ENCODE measurements at regions of chr4 and their contacts with region 1.

Region 1: GRCh38 chr4:185587427-185588161 is 52.3 kb upstream of the PDLIM3 start:
- DNase-seq: peak; percentile 91
- H3K4me3 Mint-ChIP-seq: peak overlapping the region; percentile 63
- H3K27ac Mint-ChIP-seq: peak overlapping the region; percentile 48
- H3K4me1 Mint-ChIP-seq: peaks cover 16% of the 10 kb centered on the region
- H3K27me3 Mint-ChIP-seq: peaks cover 43% of the 10 kb centered on the region

Region 2: GRCh38 chr4:185209031-185209851 is 378.4 kb before region 1 on chr4 and contains the start of gene SNX25:
- CTCF ChIA-PET with region 1: interaction called, 5 read pairs
- intact Hi-C with region 1: loop called (anchors 1 kb)
- DNase-seq: peak; percentile 84
- H3K4me3 Mint-ChIP-seq: peak within 1 kb of the TSS; percentile 84
- H3K27ac Mint-ChIP-seq: peak within 1 kb of the TSS; percentile 71
- H3K4me1 Mint-ChIP-seq: peaks cover 28% of the 10 kb centered on the region
- H3K27me3 Mint-ChIP-seq: no peaks in the 10 kb centered on the region
- total RNA-seq, gene SNX25: 11.0 to 14.6 TPM

Region 3: DNA sequence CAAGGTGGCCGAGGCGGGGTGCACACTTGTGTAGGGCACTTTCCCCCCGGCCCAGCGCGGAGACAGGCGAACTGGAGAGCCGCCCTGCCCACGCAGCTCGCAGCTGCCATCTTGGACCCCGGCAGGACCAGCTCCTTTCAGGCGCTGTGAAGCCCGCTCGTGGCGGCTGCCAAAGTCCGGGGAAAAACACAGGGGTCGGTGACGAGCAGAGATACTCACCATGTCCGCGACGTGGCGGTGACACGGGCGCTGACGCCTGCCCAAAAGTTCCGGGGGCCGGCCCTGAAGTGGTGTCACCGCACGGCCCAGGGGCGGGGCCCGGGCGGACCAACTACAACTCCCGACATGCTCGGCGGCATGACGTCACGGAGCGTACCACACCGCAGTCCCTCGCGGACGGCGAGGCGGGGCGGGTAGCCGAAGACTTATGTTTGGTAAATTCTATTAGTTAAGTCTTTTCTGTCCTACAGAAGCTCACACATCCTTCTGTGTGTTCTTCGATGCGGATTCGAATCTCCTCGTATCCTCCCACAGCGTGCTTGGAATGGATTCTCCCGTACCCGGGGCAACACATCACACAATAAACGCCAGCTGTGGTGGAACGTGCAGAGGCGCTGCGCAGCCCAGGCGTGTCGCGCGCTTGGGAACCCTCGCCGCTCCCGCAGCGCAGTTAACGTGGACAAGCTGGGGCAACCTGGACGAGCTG is 161.8 kb before region 1 on chr4 and contains the start of gene UFSP2:
- CTCF ChIA-PET with region 1: no interaction called
- intact Hi-C with region 1: loop called (anchors 2 kb)
- DNase-seq: peak; percentile 86
- H3K4me3 Mint-ChIP-seq: peak within 1 kb of the TSS; percentile 76
- H3K27ac Mint-ChIP-seq: peak within 1 kb of the TSS; percentile 96
- H3K4me1 Mint-ChIP-seq: peaks cover 28% of the 10 kb centered on the region
- H3K27me3 Mint-ChIP-seq: peaks cover 1% of the 10 kb centered on the region
- total RNA-seq, gene UFSP2: 24.4 to 30.7 TPM

Region 4: GRCh38 chr4:185566972-185567371 is 20.6 kb before region 1 on chr4:
- CTCF ChIA-PET with region 1: no interaction called
- intact Hi-C with region 1: loop called (anchors 1 kb)
- DNase-seq: no peak
- H3K4me3 Mint-ChIP-seq: no peak overlapping the region
- H3K27ac Mint-ChIP-seq: no peak overlapping the region
- H3K4me1 Mint-ChIP-seq: no peaks in the 10 kb centered on the region
- H3K27me3 Mint-ChIP-seq: peaks cover 5% of the 10 kb centered on the region

Region 5: DNA sequence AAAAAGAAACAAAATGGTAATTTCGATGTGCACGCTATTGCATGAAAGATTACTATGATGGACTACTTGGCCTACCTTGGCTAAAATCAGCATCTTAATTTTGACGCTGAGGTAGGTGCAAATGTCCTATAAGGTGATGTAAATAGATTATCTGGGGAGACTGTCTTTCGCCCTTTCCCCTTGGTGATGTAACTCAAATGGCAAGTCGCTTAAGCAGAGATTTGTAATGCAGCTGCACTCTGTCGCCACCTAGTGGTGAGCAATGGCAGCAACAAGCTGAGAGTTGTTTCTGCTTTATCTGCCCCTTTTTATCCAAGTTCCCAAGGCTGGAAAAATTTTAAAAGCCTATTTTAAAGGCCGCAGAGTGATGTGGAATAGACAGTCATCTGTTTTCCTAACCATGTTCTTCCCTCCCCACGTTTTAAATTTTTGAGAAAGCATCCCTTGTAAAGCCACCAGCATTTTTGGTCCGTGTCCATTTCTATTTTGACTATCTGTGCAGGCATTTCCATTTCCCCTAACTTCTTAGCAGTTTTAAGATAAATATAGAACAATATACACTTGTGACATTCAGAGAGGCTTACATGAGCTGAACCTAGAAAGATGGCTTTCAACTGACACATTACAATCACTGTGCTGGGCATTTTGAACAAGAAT is 10.1 kb after region 1 on chr4:
- CTCF ChIA-PET with region 1: interaction called, 28 read pairs
- intact Hi-C with region 1: no loop called
- DNase-seq: peak; percentile 84
- H3K4me3 Mint-ChIP-seq: no peak overlapping the region
- H3K27ac Mint-ChIP-seq: no peak overlapping the region
- H3K4me1 Mint-ChIP-seq: no peaks in the 10 kb centered on the region
- H3K27me3 Mint-ChIP-seq: peaks cover 13% of the 10 kb centered on the region

Region 6: GRCh38 chr4:185730387-185730786 is 142.8 kb after region 1 on chr4:
- CTCF ChIA-PET with region 1: no interaction called
- intact Hi-C with region 1: no loop called
- DNase-seq: no peak
- H3K4me3 Mint-ChIP-seq: no peak overlapping the region
- H3K27ac Mint-ChIP-seq: no peak overlapping the region
- H3K4me1 Mint-ChIP-seq: no peaks in the 10 kb centered on the region
- H3K27me3 Mint-ChIP-seq: peaks cover 24% of the 10 kb centered on the region

Region 7: GRCh38 chr4:186201535-186202230 is 614.1 kb after region 1 on chr4:
- CTCF ChIA-PET with region 1: no interaction called
- intact Hi-C with region 1: loop called (anchors 5 kb)
- DNase-seq: peak; percentile 79
- H3K4me3 Mint-ChIP-seq: peak overlapping the region; percentile 13
- H3K27ac Mint-ChIP-seq: peak overlapping the region; percentile 57
- H3K4me1 Mint-ChIP-seq: peaks cover 34% of the 10 kb centered on the region
- H3K27me3 Mint-ChIP-seq: no peaks in the 10 kb centered on the region

Region 8: DNA sequence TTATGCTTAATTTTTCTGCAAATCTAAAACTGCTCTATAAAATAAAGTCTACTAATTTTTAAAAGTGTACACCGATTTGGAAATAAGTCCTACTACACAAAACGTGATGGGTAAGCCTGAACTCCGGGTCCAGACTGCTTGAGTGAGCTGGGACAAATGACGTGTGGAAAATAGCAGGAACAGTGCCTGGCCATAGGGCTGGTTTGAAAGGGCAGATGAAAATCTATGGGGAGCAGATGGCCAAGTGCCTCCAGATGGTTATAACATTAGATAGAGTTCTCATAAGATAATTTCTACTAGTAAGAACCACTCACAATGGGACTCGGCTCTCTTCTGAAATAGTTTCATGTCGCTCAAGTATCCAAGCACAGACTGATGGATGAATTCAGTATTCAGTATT is 730.9 kb after region 1 on chr4:
- CTCF ChIA-PET with region 1: no interaction called
- intact Hi-C with region 1: no loop called
- DNase-seq: no peak
- H3K4me3 Mint-ChIP-seq: no peak overlapping the region
- H3K27ac Mint-ChIP-seq: no peak overlapping the region
- H3K4me1 Mint-ChIP-seq: no peaks in the 10 kb centered on the region
- H3K27me3 Mint-ChIP-seq: peaks cover 8% of the 10 kb centered on the region

Measured in activated naive CD4-positive, alpha-beta T cell treated with anti-CD3 and anti-CD28 coated beads for 36 hours (primary cell).